Ascending aorta (tissue), 2 donors: ENCODE measurements at regions of chr6 and their contacts with region 1.

Region 1: GRCh38 chr6:36724514-36725390 is 27.1 kb downstream of the RAB44 start:
- DNase-seq: peak in 1 of 2 donors; percentile 82
- H3K4me3 ChIP-seq: no peak overlapping the region
- H3K27ac ChIP-seq: no peak overlapping the region
- H3K4me1 ChIP-seq: no peaks in the 10 kb centered on the region
- H3K27me3 ChIP-seq: no peaks in the 10 kb centered on the region
- CTCF ChIP-seq: peak; percentile 37 to 53 (median 37)

Region 2: GRCh38 chr6:36615018-36615761 is 109.6 kb before region 1 on chr6:
- intact Hi-C with region 1: loop called (anchors 1 kb)
- DNase-seq: peak in 1 of 2 donors; percentile 73
- H3K4me3 ChIP-seq: no peak overlapping the region
- H3K27ac ChIP-seq: peak overlapping the region; percentile 36 to 40
- H3K4me1 ChIP-seq: peaks cover 0 to 9% of the 10 kb centered on the region in 2 donors
- H3K27me3 ChIP-seq: no peaks in the 10 kb centered on the region
- CTCF ChIP-seq: peak; percentile 61 to 68 (median 62)

Region 3: DNA sequence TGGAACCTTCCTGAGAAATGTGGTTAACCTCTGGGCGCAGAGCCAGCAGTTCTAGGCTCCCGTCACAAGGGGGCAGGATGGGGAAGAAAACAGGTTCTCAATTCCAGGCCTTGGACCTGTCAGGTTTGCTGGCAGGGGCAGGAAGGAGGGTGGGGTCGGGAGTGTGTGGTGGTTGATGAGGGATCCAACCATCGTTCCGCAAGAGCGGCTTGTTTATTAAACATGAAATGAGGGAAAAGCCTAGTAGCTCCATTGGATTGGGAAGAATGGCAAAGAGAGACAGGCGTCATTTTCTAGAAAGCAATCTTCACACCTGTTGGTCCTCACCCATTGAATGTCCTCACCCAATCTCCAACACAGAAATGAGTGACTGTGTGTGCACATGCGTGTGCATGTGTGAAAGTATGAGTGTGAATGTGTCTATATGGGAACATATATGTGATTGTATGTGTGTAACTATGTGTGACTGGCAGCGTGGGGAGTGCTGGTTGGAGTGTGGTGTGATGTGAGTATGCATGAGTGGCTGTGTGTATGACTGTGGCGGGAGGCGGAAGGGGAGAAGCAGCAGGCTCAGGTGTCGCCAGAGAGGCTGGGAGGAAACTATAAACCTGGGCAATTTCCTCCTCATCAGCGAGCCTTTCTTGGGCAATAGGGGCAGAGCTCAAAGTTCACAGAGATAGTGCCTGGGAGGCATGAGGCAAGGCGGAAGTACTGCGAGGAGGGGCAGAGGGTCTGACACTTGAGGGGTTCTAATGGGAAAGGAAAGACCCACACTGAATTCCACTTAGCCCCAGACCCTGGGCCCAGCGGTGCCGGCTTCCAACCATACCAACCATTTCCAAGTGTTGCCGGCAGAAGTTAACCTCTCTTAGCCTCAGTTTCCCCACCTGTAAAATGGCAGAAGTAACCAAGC is 100.9 kb before region 1 on chr6:
- intact Hi-C with region 1: loop called (anchors 2 kb)
- DNase-seq: peak; percentile 43 to 93
- H3K4me3 ChIP-seq: no peak overlapping the region
- H3K27ac ChIP-seq: no peak overlapping the region
- H3K4me1 ChIP-seq: peaks cover 18 to 46% of the 10 kb centered on the region in 2 donors
- H3K27me3 ChIP-seq: no peaks in the 10 kb centered on the region
- CTCF ChIP-seq: peak; percentile 82 to 96 (median 82)